Lower leg skin (tissue), 4 donors: ENCODE measurements at regions of chr6 and their contacts with region 1.

Region 1: DNA sequence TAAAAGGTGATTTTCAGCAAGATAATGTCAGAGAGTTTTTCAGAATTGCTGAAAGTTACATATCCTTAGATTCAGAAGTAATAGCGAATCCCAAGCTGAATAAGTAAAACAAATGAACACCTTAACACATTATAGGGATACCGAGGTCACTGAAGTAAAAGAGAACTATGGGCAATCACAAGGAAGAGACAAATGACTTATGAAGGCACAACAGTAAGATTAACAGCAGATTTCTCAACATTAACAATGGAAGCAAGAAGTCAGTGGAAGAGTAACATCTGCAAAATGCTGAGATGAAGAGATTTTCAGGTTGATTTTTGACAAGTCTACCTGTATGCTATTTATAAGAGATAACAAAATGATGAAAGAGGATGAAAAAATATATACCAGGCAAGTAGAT is 86.1 kb upstream of the EZR start:
- DNase-seq: no peak
- H3K4me3 ChIP-seq: no peak overlapping the region
- CTCF ChIP-seq: no peak
- POLR2A ChIP-seq: no peak

Region 2: DNA sequence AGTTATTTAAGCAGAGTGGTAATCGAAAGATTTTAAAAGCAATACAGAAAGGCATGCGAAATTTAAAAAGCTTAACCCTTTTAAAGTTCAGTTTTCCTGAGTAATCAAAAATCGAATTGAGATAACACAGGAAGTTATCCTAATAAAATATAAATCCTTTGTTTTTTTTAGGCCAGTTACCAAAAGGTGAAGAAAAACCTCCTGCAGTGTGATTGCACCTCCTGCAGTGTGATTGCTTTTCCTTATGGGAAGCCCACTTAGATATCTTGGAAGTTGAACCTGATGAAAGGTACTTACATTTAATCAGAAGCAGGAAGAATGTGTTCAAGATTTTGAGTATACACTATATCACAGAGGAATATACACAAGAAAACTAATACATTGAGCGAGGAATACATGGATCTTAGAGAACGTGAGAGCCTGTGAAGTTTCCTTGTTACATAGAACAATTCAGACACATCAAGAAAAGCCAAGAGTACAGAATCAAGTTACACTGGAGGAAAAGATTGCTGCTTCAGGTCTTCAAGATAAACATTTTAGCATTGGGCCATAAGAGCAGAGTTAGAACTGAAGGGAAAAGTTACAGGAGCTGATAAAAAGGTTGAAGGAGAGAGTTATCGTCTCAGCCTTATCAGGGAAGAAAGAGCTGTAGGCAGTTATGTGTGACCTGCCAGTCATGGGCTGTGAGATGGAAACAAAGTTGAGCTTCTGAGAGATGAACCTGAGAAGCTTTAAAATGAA is 353.1 kb before region 1 on chr6:
- intact Hi-C with region 1: loop called (anchors 2 kb)
- DNase-seq: no peak
- H3K4me3 ChIP-seq: no peak overlapping the region
- CTCF ChIP-seq: no peak
- POLR2A ChIP-seq: no peak

Region 3: GRCh38 chr6:158660333-158660754 is 244.9 kb before region 1 on chr6:
- intact Hi-C with region 1: no loop called
- DNase-seq: no peak
- H3K4me3 ChIP-seq: no peak overlapping the region
- CTCF ChIP-seq: no peak
- POLR2A ChIP-seq: no peak

Region 4: DNA sequence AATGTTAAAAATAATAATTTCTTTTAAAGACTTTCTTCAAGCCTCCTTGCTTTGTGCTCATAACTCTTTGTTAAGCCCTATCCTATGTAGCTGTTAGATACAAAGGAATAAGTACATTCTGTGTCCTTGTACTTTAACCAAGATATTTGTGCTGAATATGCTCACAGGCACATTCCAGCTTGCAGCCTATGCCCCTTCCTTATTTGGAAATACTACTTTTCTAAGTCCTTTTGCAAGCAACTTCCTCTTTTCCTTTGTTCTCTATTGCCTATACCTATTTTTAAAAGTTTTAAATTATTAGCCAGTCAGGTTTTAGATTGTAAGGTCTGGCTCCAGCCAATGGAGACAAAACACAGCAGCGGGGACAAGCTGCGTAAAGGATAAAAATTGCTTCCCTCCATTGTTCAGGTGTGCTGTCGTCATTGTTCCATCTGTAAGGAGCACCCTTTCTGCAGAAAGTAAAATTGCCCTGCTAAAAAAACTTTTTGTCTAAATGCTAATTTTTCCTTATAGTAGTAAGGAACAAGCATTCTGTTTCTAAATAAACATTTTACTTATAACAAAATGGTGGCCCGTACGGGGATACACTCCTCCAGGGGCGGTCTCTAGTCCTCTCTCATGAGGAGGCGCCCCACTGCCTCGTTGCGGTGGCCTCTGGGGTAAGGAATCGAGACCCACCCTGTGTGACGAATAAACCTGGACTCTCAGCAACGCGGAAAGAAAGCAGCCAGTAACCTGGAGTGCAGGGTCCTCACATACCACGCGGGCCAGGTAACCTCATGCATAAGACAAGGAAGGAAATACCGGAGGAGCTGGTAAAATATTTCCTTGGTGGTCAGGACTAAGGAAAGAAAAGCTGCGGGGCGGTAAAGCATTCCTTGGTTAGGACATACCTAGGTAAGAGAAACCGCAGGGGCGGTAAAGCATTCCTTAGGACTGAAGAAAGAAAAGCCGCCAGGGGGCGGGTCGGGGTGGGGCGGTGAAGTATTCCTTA is 175.1 kb before region 1 on chr6:
- intact Hi-C with region 1: no loop called
- DNase-seq: no peak
- H3K4me3 ChIP-seq: no peak overlapping the region
- CTCF ChIP-seq: no peak
- POLR2A ChIP-seq: no peak

Region 5: GRCh38 chr6:158819213-158819909 is 85.9 kb before region 1 on chr6 and contains the start of gene EZR:
- intact Hi-C with region 1: no loop called
- DNase-seq: peak; percentile 63 to 95
- H3K4me3 ChIP-seq: peak within 1 kb of the TSS; percentile 67
- CTCF ChIP-seq: no peak
- POLR2A ChIP-seq: no peak
- total RNA-seq, gene EZR: 200 to 235 (median 212) TPM